CD14-positive monocyte (primary cell): ENCODE measurements at regions of chr14 and their contacts with region 1.

Region 1: GRCh38 chr14:67111022-67111421 is 78.2 kb upstream of the GARIN2 start:
- DNase-seq: no peak
- H3K4me3 ChIP-seq: no peak overlapping the region
- H3K4me3 Mint-ChIP-seq: no peak overlapping the region
- H3K27ac ChIP-seq: no peak overlapping the region
- H3K27ac Mint-ChIP-seq: no peak overlapping the region
- H3K4me1 ChIP-seq: no peaks in the 10 kb centered on the region
- H3K4me1 Mint-ChIP-seq: no peaks in the 10 kb centered on the region
- H3K27me3 ChIP-seq: no peaks in the 10 kb centered on the region
- H3K27me3 Mint-ChIP-seq: peaks cover 0 to 1% (median 0%) of the 10 kb centered on the region in 3 donors
- CTCF ChIP-seq: no peak

Region 2: GRCh38 chr14:66495218-66496098 is 615.6 kb before region 1 on chr14:
- intact Hi-C with region 1: loop called in 1 of 2 experiments (anchors 10 kb)
- DNase-seq: peak; percentile 25 to 45 (median 44)
- H3K4me3 ChIP-seq: no peak overlapping the region
- H3K4me3 Mint-ChIP-seq: no peak overlapping the region
- H3K27ac ChIP-seq: no peak overlapping the region
- H3K27ac Mint-ChIP-seq: peak overlapping the region in 1 of 7 donors; percentile 31
- H3K4me1 ChIP-seq: no peaks in the 10 kb centered on the region
- H3K4me1 Mint-ChIP-seq: peaks cover 5% of the 10 kb centered on the region
- H3K27me3 ChIP-seq: no peaks in the 10 kb centered on the region
- H3K27me3 Mint-ChIP-seq: peaks cover 0 to 6% (median 0%) of the 10 kb centered on the region in 3 donors
- CTCF ChIP-seq: peak; percentile 85

Region 3: GRCh38 chr14:67068251-67068650 is 42.8 kb before region 1 on chr14:
- intact Hi-C with region 1: no loop called
- DNase-seq: no peak
- H3K4me3 ChIP-seq: no peak overlapping the region
- H3K4me3 Mint-ChIP-seq: no peak overlapping the region
- H3K27ac ChIP-seq: no peak overlapping the region
- H3K27ac Mint-ChIP-seq: no peak overlapping the region
- H3K4me1 ChIP-seq: no peaks in the 10 kb centered on the region
- H3K4me1 Mint-ChIP-seq: no peaks in the 10 kb centered on the region
- H3K27me3 ChIP-seq: no peaks in the 10 kb centered on the region
- H3K27me3 Mint-ChIP-seq: no peaks in the 10 kb centered on the region
- CTCF ChIP-seq: no peak

Region 4: GRCh38 chr14:67319142-67319541 is 208.1 kb after region 1 on chr14:
- intact Hi-C with region 1: no loop called
- DNase-seq: no peak
- H3K4me3 ChIP-seq: no peak overlapping the region
- H3K4me3 Mint-ChIP-seq: no peak overlapping the region
- H3K27ac ChIP-seq: no peak overlapping the region
- H3K27ac Mint-ChIP-seq: no peak overlapping the region
- H3K4me1 ChIP-seq: no peaks in the 10 kb centered on the region
- H3K4me1 Mint-ChIP-seq: peaks cover 4% of the 10 kb centered on the region
- H3K27me3 ChIP-seq: no peaks in the 10 kb centered on the region
- H3K27me3 Mint-ChIP-seq: no peaks in the 10 kb centered on the region
- CTCF ChIP-seq: no peak